ENCODE measurements at regions of chr19 and their contacts with region 1.

Region 1: GRCh38 chr19:12983542-12984142 is 11.6 kb upstream of the NFIX start:
- DNase-seq: peak; percentile 84
- H3K4me3 Mint-ChIP-seq: no peak overlapping the region
- H3K27ac Mint-ChIP-seq: no peak overlapping the region
- H3K4me1 Mint-ChIP-seq: peaks cover 1% of the 10 kb centered on the region
- H3K27me3 Mint-ChIP-seq: peaks cover 13% of the 10 kb centered on the region

Region 2: GRCh38 chr19:12932392-12933286 is 51.0 kb before region 1 on chr19:
- CTCF ChIA-PET with region 1: no interaction called
- POLR2A ChIA-PET with region 1: no interaction called
- DNase-seq: peak; percentile 38
- H3K4me3 Mint-ChIP-seq: peak overlapping the region; percentile 99
- H3K27ac Mint-ChIP-seq: peak overlapping the region; percentile 87
- H3K4me1 Mint-ChIP-seq: peaks cover 33% of the 10 kb centered on the region
- H3K27me3 Mint-ChIP-seq: no peaks in the 10 kb centered on the region

Region 3: GRCh38 chr19:13033819-13034611 is 50.4 kb after region 1 on chr19:
- CTCF ChIA-PET with region 1: interaction called, 23 read pairs
- POLR2A ChIA-PET with region 1: no interaction called
- DNase-seq: peak; percentile 42
- H3K4me3 Mint-ChIP-seq: no peak overlapping the region
- H3K27ac Mint-ChIP-seq: no peak overlapping the region
- H3K4me1 Mint-ChIP-seq: peaks cover 2% of the 10 kb centered on the region
- H3K27me3 Mint-ChIP-seq: peaks cover 4% of the 10 kb centered on the region

Region 4: GRCh38 chr19:13044231-13044836 is 60.7 kb after region 1 on chr19:
- CTCF ChIA-PET with region 1: no interaction called
- POLR2A ChIA-PET with region 1: no interaction called
- DNase-seq: no peak
- H3K4me3 Mint-ChIP-seq: no peak overlapping the region
- H3K27ac Mint-ChIP-seq: no peak overlapping the region
- H3K4me1 Mint-ChIP-seq: peaks cover 2% of the 10 kb centered on the region
- H3K27me3 Mint-ChIP-seq: peaks cover 5% of the 10 kb centered on the region

Measured in activated CD4-positive, alpha-beta memory T cell treated with anti-CD3 and anti-CD28 coated beads, Interleukin-2, amount 10 ng/mL, durations not matched to agents 7 days and 5 days (primary cell).